ENCODE measurements at regions of chr9 and their contacts with region 1.

Region 1: GRCh38 chr9:84940294-84940693 is 270.8 kb downstream of the NTRK2 start:
- DNase-seq: peak; percentile 96
- H3K4me3 ChIP-seq: no peak overlapping the region
- H3K27ac ChIP-seq: peak overlapping the region; percentile 59
- H3K4me1 ChIP-seq: peaks cover 15% of the 10 kb centered on the region
- H3K27me3 ChIP-seq: no peaks in the 10 kb centered on the region
- CTCF ChIP-seq: no peak

Region 2: GRCh38 chr9:84773022-84773421 is 167.3 kb before region 1 on chr9:
- CTCF ChIA-PET with region 1: no interaction called
- dilution Hi-C with region 1: no loop called
- in situ Hi-C with region 1: no loop called
- intact Hi-C with region 1: loop called (anchors 5 kb)
- DNase-seq: peak; percentile 78
- H3K4me3 ChIP-seq: no peak overlapping the region
- H3K27ac ChIP-seq: peak overlapping the region; percentile 42
- H3K4me1 ChIP-seq: peaks cover 22% of the 10 kb centered on the region
- H3K27me3 ChIP-seq: no peaks in the 10 kb centered on the region
- CTCF ChIP-seq: no peak